ENCODE measurements at regions of chr1 and their contacts with region 1.

Region 1: DNA sequence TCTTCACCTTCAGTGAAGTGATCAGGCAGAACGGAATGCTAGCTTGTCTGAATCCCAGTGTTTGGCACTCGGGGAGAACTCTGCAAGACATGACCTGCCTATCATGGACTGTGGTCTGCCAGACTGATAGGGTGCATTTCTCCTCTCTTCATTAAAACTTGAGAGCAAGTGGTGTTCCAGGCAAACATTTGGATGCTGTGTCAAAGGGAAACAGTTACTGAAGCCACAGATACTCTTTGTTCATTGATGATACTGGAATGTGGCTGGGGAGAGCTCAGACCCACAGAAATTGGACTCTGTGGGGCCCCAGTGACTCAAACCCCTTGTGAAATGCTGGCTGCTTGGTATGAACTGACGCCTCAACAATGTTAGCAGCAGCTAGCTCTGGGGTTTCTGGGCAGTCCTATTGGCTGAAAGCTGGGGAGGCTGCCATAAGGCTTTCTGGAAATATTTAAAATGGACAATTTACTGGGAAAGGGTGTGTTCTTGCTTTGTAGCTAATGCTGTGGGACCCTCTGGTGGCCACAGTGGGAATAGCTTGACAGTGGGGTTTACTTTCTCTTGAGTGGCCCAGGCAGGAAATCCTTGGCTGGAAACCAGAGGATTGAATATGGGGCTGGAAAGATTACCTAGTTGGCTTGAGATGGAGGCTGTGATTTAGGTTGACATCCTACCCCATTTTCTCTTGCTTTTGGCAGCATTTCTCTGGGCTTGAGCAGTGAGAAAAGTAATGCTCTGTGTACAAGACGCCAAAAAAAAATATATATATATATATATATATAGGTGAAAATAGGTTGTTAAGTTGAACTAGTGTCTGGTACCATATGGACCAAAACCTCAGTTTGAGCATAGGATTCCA is 8.0 kb upstream of the S100A10 start:
- DNase-seq: peak; percentile 89
- ATAC-seq: peak; percentile 67
- H3K4me3 Mint-ChIP-seq: no peak overlapping the region
- H3K27ac Mint-ChIP-seq: no peak overlapping the region
- H3K4me1 Mint-ChIP-seq: peaks cover 18% of the 10 kb centered on the region
- H3K27me3 Mint-ChIP-seq: peaks cover 4% of the 10 kb centered on the region
- CTCF ChIP-seq: peak; percentile 84

Region 2: DNA sequence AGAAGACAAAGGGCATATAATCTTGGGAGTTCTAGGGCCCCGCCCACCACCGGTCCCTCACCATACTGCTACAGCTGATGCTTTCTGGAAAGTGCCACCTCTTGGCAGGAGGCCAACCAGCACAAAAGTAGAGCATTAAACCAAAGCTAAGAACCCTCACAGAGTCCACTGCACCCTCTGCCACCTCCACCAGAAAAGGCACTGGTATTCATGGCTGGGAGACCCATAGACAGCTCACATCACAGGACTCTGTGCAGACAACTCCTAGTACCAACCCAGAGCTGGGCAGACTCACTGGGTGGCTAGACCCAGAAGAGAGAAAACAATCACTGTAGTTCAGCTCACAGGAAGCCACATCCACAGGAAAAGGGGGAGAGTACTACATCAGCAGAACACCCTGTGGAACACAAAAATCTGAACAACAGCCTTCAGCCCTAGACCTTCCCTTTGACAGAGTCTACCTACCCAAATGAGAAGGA is 103.1 kb before region 1 on chr1:
- CTCF ChIA-PET with region 1: interaction called, 10 read pairs
- POLR2A ChIA-PET with region 1: no interaction called
- DNase-seq: no peak
- ATAC-seq: no peak
- H3K4me3 Mint-ChIP-seq: no peak overlapping the region
- H3K27ac Mint-ChIP-seq: no peak overlapping the region
- H3K4me1 Mint-ChIP-seq: no peaks in the 10 kb centered on the region
- H3K27me3 Mint-ChIP-seq: peaks cover 3% of the 10 kb centered on the region; the same call in 1 of the 2 replicates
- CTCF ChIP-seq: no peak

Region 3: GRCh38 chr1:151934048-151934493 is 67.5 kb before region 1 on chr1:
- CTCF ChIA-PET with region 1: interaction called, 149 read pairs
- POLR2A ChIA-PET with region 1: no interaction called
- DNase-seq: peak; percentile 29
- ATAC-seq: peak; percentile 90
- H3K4me3 Mint-ChIP-seq: no peak overlapping the region
- H3K27ac Mint-ChIP-seq: no peak overlapping the region; the same call in 1 of the 2 replicates
- H3K4me1 Mint-ChIP-seq: peaks cover 17% of the 10 kb centered on the region
- H3K27me3 Mint-ChIP-seq: peaks cover 2% of the 10 kb centered on the region; the same call in 1 of the 2 replicates
- CTCF ChIP-seq: peak; percentile 67

Region 4: DNA sequence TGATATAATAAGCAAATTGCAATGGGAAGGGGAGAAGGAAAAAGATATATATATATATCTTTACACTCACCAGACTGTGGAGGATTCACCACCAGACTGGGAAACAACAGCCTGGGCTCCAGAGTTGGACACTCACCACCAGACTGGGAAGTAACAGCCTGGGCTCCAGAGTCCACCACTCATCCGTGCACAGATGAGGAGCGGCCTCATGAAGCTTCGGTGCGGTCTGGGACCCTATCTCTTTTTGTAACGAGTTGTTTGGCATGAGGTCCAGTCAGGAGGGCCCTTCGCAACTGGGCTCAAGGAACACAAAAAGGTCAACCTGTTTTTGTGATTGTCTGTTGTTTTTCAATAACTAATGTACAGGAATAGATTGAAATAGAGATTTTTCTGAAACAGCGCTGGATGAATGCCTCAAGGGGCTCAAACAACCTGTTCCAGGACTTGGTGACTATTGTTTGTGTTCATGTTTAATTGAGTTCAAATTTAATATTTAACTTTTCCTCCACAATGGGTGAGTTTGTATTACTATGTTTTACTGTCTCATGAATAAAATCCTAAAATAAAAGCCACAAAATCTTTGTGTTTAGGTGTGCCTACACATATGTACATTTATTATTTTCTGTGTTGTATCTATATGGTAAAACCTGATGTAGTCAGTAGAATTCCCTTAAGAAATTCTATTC is 48.1 kb before region 1 on chr1:
- CTCF ChIA-PET with region 1: interaction called, 10 read pairs
- POLR2A ChIA-PET with region 1: no interaction called
- DNase-seq: no peak
- ATAC-seq: no peak
- H3K4me3 Mint-ChIP-seq: no peak overlapping the region
- H3K27ac Mint-ChIP-seq: no peak overlapping the region
- H3K4me1 Mint-ChIP-seq: no peaks in the 10 kb centered on the region
- H3K27me3 Mint-ChIP-seq: no peaks in the 10 kb centered on the region; the same call in 1 of the 2 replicates
- CTCF ChIP-seq: no peak

Region 5: DNA sequence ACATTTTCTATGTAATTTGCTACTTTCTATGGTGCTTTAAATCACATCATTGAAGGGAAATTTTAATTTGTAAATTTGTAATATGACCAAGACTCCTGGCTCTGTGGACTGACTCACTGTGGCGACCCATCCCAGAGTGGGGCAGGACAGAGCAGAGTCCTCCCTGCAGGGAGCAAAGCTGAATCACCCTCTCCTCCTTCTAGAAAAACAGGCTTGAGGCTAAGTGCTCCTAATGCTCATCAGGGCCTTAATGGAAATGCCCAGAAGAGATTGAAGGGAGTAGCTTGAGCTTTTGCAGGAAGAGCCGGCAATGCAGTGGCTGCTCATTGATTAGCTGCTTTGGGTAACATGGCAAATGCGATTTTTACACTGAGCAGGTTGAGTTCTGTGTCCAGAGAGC is 24.8 kb before region 1 on chr1:
- CTCF ChIA-PET with region 1: interaction called, 293 read pairs
- POLR2A ChIA-PET with region 1: no interaction called
- DNase-seq: no peak
- ATAC-seq: no peak
- H3K4me3 Mint-ChIP-seq: no peak overlapping the region
- H3K27ac Mint-ChIP-seq: no peak overlapping the region
- H3K4me1 Mint-ChIP-seq: peaks cover 27% of the 10 kb centered on the region
- H3K27me3 Mint-ChIP-seq: no peaks in the 10 kb centered on the region; the same call in 1 of the 2 replicates
- CTCF ChIP-seq: no peak

Region 6: GRCh38 chr1:152034646-152035405 is 33.2 kb after region 1 on chr1:
- CTCF ChIA-PET with region 1: interaction called, 45 read pairs
- POLR2A ChIA-PET with region 1: no interaction called
- DNase-seq: peak; percentile 76
- ATAC-seq: peak; percentile 71
- H3K4me3 Mint-ChIP-seq: peak overlapping the region; percentile 89
- H3K27ac Mint-ChIP-seq: peak overlapping the region; percentile 85
- H3K4me1 Mint-ChIP-seq: peaks cover 40% of the 10 kb centered on the region
- H3K27me3 Mint-ChIP-seq: peaks cover 9% of the 10 kb centered on the region
- CTCF ChIP-seq: peak; percentile 88

Region 7: GRCh38 chr1:152118915-152119314 is 117.3 kb after region 1 on chr1:
- CTCF ChIA-PET with region 1: no interaction called
- POLR2A ChIA-PET with region 1: no interaction called
- DNase-seq: no peak
- ATAC-seq: no peak
- H3K4me3 Mint-ChIP-seq: no peak overlapping the region
- H3K27ac Mint-ChIP-seq: no peak overlapping the region
- H3K4me1 Mint-ChIP-seq: peaks cover 3% of the 10 kb centered on the region; the same call in 1 of the 2 replicates
- H3K27me3 Mint-ChIP-seq: peaks cover 25% of the 10 kb centered on the region
- CTCF ChIP-seq: no peak